Gastrocnemius medialis (tissue), 4 donors: ENCODE measurements at regions of chr4 and their contacts with region 1.

Region 1: DNA sequence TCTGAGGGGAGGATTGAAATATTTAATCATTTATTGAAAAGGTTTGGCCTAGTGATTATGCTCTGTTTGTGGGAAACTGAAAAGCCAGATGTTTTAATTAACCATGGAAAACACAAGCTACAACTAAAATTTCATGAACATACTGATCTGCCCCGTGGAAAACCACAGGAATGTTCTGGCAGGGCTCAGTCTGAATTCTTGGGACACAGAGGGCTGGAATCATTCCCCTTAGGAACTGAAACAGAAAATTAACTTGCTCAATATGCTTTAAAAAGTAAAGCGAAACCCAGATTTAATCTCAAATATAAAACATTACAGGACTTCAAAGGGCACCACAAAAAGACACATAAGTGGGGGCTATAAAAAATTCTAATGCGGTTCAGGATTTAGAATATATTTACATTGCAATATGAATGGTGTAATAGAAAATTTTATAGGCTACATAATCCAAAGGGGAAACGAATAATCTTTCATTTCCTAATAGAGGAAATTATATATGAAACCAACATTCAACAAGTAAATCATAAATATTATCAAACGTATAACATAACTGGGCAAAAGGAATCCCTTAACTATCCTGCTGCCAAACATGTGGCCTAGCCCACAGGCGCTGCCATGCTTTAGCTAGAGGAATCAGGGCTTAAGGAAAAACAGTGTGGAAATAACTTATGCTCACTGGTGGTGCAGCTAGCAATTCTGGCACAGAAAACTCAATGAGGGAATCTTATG is 70.9 kb downstream of the APBB2 start:
- DNase-seq: peak; percentile 52 to 65
- ATAC-seq: peak; percentile 84 to 85
- H3K4me3 ChIP-seq: peak overlapping the region in 3 of 4 donors; percentile 1 to 7 (median 5)
- H3K27ac ChIP-seq: peak overlapping the region; percentile 77 to 83 (median 80)
- H3K4me1 ChIP-seq: peaks cover 37 to 56% of the 10 kb centered on the region in 2 donors
- H3K27me3 ChIP-seq: no peaks in the 10 kb centered on the region
- CTCF ChIP-seq: no peak
- POLR2A ChIP-seq: no peak

Region 2: GRCh38 chr4:41120297-41121217 is 22.9 kb before region 1 on chr4:
- in situ Hi-C with region 1: no loop called
- intact Hi-C with region 1: loop called (anchors 2 kb)
- DNase-seq: peak; percentile 53 to 66
- ATAC-seq: peak; percentile 84 to 85
- H3K4me3 ChIP-seq: peak overlapping the region; percentile 20 to 33 (median 24)
- H3K27ac ChIP-seq: peak overlapping the region; percentile 37 to 74 (median 56)
- H3K4me1 ChIP-seq: peaks cover 22 to 23% of the 10 kb centered on the region in 2 donors
- H3K27me3 ChIP-seq: no peaks in the 10 kb centered on the region
- CTCF ChIP-seq: no peak
- POLR2A ChIP-seq: no peak